ENCODE measurements at regions of chr13 and their contacts with region 1.

Region 1: DNA sequence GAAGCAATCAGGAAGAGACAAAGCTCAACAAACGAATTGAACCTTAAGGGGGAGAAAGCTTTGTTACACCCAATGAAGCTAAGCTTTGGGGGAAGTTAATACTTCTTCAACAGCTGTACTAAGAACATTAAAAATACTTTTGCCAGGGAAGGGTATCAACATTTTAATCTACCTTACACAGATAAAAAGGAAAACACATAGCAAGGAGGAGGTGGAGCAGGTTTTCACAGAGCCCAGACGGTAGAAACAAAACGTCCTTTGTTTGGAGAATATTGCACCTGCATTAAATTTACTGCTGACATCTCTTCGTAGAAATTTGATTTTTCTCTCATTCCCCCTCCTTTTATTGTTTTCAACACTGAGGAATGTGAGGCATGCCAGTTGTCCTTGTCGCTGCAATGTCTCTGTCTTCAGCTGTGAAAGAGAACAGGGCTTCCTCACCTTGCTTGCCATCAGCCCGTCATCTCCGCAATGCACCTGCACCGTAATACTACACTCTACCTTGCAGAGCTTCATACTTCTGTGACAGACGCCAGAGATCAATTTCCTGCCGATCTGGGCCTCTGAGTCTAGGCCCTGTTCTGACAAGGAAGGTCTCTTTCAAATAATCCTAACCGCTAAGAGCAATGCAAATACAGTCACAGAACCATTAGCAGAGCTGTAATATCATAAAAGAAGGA is 270.8 kb downstream of the SPRY2 start:
- DNase-seq: no peak
- H3K4me3 ChIP-seq: no peak overlapping the region
- H3K27ac ChIP-seq: no peak overlapping the region
- H3K4me1 ChIP-seq: no peaks in the 10 kb centered on the region
- H3K27me3 ChIP-seq: no peaks in the 10 kb centered on the region
- CTCF ChIP-seq: no peak

Region 2: DNA sequence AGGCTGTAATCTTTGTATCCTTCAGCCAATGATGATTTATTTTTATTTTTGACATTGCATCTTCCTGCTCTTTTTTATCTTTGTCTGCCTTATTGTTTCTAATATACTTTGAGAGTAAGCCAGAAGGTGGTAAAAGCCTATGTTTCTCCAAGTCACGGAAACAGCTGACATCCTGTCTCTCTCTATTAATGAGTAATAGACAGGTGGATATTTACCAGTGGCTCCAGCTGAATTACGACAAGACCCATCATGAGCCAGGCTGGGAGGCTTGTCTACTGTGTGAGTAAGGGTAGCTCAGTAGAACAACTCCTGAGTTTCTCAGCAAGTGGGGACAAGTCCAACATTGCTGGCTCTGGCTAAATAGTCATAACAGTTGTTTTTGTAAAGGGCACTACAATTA is 422.6 kb before region 1 on chr13:
- CTCF ChIA-PET with region 1: no interaction called
- dilution Hi-C with region 1: no loop called
- in situ Hi-C with region 1: no loop called
- intact Hi-C with region 1: no loop called
- DNase-seq: peak; percentile 99
- H3K4me3 ChIP-seq: no peak overlapping the region
- H3K27ac ChIP-seq: peak overlapping the region; percentile 80
- H3K4me1 ChIP-seq: peaks cover 30% of the 10 kb centered on the region
- H3K27me3 ChIP-seq: no peaks in the 10 kb centered on the region
- CTCF ChIP-seq: no peak

Region 3: DNA sequence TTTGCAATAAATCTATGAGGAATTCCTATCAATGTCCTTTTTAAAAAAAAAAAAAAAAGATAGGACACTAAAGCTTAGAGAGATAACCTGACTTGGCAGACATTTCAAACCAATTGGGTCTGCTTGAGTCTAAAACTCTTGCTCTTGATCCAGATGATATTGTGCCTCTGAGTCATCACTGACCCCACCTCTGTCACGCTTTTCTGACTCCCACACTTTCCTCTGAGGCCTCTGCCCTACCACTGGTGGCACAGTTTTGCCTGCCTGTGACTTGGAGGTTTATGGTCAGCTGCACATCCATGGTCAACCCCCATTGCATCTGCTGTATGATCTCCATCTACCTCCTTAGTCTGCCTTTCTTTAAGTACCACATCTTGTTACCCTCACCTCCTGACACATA is 57.9 kb before region 1 on chr13:
- CTCF ChIA-PET with region 1: no interaction called
- dilution Hi-C with region 1: no loop called
- in situ Hi-C with region 1: no loop called
- intact Hi-C with region 1: no loop called
- DNase-seq: no peak
- H3K4me3 ChIP-seq: no peak overlapping the region
- H3K27ac ChIP-seq: no peak overlapping the region
- H3K4me1 ChIP-seq: peaks cover 4% of the 10 kb centered on the region
- H3K27me3 ChIP-seq: no peaks in the 10 kb centered on the region
- CTCF ChIP-seq: no peak

Region 4: GRCh38 chr13:80145171-80145690 is 75.1 kb after region 1 on chr13:
- CTCF ChIA-PET with region 1: no interaction called
- dilution Hi-C with region 1: loop called (anchors 5 kb)
- in situ Hi-C with region 1: no loop called
- intact Hi-C with region 1: no loop called
- DNase-seq: no peak
- H3K4me3 ChIP-seq: no peak overlapping the region
- H3K27ac ChIP-seq: no peak overlapping the region
- H3K4me1 ChIP-seq: no peaks in the 10 kb centered on the region
- H3K27me3 ChIP-seq: no peaks in the 10 kb centered on the region
- CTCF ChIP-seq: no peak

Measured in mammary epithelial cell (primary cell).